Activated CD4-positive, alpha-beta memory T cell treated with anti-CD3 and anti-CD28 coated beads, Interleukin-2, amount 10 ng/mL, durations not matched to agents 7 days and 5 days (primary cell): ENCODE measurements at regions of chr2 and their contacts with region 1.

Region 1: DNA sequence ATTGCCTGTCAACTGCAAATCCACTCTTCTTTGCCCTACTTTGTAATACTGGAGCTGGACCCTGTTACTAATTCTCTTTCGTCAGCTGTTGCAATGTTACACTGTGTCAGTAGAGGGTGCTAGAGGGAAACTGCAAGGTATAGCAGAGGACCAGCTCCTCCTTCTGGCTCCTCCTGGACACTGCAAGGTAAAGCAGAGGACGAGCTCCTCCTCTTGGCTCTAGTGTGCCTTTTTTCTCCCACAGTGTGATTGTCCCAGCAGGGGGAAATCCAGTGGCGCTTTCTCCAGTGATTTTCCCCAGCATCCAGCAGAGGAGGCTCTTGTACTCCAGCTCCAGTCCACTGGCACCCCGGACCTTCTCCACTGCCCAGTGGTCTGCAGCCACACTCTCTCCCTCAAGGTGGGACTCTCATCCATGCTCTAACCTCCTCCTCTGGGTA is 95.6 kb downstream of the CAPN13 start:
- DNase-seq: peak; percentile 86
- H3K4me3 Mint-ChIP-seq: no peak overlapping the region
- H3K27ac Mint-ChIP-seq: no peak overlapping the region
- H3K4me1 Mint-ChIP-seq: peaks cover 15% of the 10 kb centered on the region
- H3K27me3 Mint-ChIP-seq: no peaks in the 10 kb centered on the region

Region 2: DNA sequence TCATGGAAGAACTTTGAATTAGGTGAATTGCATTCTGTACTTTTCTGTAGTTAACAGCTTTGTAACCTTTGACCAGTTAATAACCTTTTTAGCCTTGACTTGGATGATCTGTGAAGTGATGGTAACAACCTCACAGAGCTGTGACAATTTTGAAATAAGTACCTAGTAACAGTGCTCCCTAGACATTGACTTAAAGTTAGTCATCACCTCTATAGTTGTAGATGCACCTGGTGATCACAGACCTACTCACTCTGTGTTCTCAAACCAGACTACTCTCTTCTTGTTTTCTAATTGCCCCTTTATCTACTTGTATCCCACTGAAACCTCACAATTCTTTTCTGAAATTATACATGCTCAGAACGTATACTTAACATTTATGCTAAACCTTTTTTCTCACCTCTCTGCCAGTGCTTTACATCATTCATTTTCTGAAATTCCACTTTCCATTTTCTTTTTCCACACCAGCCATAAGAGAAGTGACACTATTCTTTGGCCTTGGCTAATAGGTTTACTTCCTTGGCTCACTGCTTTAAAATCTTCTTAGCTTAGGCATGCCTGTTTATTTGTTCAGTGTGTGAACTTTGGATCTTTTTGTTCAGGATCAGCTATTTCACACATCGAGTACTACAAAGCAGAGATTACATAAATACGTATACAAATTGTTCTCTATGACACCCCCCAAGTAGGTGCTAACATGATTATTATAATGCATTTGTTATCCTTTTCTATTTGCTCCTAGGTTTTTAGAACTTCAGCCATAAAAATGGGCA is 555.6 kb before region 1 on chr2:
- CTCF ChIA-PET with region 1: interaction called, 21 read pairs
- POLR2A ChIA-PET with region 1: no interaction called
- DNase-seq: no peak
- H3K4me3 Mint-ChIP-seq: no peak overlapping the region
- H3K27ac Mint-ChIP-seq: no peak overlapping the region
- H3K4me1 Mint-ChIP-seq: peaks cover 14% of the 10 kb centered on the region
- H3K27me3 Mint-ChIP-seq: no peaks in the 10 kb centered on the region

Region 3: GRCh38 chr2:30225131-30225762 is 486.4 kb before region 1 on chr2:
- CTCF ChIA-PET with region 1: interaction called, 10 read pairs
- POLR2A ChIA-PET with region 1: no interaction called
- DNase-seq: peak; percentile 59
- H3K4me3 Mint-ChIP-seq: peak overlapping the region; percentile 95
- H3K27ac Mint-ChIP-seq: peak overlapping the region; percentile 93
- H3K4me1 Mint-ChIP-seq: peaks cover 59% of the 10 kb centered on the region
- H3K27me3 Mint-ChIP-seq: peaks cover 5% of the 10 kb centered on the region

Region 4: GRCh38 chr2:30611583-30611982 is 100.1 kb before region 1 on chr2:
- CTCF ChIA-PET with region 1: no interaction called
- POLR2A ChIA-PET with region 1: no interaction called
- DNase-seq: no peak
- H3K4me3 Mint-ChIP-seq: no peak overlapping the region
- H3K27ac Mint-ChIP-seq: no peak overlapping the region
- H3K4me1 Mint-ChIP-seq: no peaks in the 10 kb centered on the region
- H3K27me3 Mint-ChIP-seq: no peaks in the 10 kb centered on the region

Region 5: DNA sequence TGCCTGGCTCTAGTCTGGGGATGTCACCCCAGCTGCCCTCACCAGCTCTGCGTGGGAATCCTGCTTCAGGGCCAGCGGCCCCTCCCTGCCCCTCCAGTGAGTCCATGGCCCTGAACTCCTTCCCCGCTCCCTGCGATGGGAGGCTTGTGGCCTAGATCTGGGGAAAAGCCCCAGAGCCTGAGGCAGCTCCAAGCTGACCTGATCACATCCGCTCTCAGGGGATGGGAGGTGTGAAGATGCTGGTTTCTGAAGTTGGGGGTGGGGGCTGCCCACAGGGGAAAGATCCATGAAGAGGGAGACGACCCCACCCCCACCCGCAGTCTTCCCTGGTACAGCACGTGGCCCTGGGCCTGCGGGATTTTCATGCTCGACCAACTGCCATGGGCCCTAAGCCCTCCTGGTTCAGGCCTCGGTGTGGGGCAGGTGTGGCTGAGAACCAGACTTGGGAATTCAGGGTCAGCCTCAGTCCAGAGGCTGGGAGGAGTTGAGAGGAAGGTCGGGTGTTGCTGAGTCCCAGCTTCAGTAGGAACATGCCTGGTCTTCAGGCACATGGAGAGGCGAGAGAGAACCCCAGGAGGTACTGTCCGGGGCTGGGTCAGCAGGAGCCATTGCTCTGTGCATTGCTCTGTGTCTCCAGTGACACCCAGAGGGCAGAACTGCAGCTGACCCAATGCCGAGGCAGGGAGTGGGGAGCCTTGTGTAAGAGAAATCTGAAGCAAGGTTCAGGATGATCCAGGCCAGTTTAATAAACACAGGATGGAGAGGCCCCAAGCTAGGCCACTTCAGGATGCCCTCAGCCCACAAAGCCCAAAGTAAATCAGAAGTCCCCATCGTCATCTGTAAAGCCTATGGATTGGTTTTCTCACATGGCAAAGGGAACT is 19.5 kb before region 1 on chr2:
- CTCF ChIA-PET with region 1: interaction called, 23 read pairs
- POLR2A ChIA-PET with region 1: no interaction called
- DNase-seq: no peak
- H3K4me3 Mint-ChIP-seq: no peak overlapping the region
- H3K27ac Mint-ChIP-seq: no peak overlapping the region
- H3K4me1 Mint-ChIP-seq: no peaks in the 10 kb centered on the region
- H3K27me3 Mint-ChIP-seq: peaks cover 3% of the 10 kb centered on the region

Region 6: DNA sequence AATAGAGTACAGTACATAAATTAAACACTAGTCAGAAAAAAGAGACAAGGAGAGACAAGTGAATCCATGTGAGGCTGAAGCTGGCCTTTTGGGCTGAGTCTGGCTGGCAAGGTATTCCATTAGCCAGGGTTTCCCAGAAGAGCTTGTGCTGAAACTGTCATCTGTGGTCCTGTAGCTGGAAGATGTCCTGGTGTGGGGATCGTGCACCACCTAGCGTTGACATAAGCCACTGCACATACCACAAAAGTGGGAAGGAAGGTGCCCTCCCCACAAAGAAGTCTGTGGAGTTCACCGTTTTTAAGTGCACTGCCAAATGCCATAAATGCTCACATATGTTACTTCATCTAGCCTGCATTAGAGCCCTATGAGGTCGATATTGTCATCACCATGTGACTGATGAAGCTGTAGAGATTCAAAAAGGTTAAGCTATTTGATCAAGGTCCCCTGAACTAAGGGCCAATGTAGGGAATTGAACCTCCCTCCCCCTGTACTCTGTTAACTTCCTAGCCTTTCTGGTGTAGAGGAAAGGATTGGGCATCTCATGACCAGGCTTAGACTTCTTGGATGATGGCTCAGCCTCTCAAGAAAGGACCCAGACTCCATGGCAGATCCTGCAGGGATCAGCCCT is 458.5 kb after region 1 on chr2:
- CTCF ChIA-PET with region 1: interaction called, 59 read pairs
- POLR2A ChIA-PET with region 1: no interaction called
- DNase-seq: peak; percentile 62
- H3K4me3 Mint-ChIP-seq: no peak overlapping the region
- H3K27ac Mint-ChIP-seq: no peak overlapping the region
- H3K4me1 Mint-ChIP-seq: peaks cover under 1% of the 10 kb centered on the region
- H3K27me3 Mint-ChIP-seq: no peaks in the 10 kb centered on the region